ENCODE measurements at regions of chr22 and their contacts with region 1.

Region 1: GRCh38 chr22:39178206-39179111 is 26.0 kb upstream of the CBX7 start:
- DNase-seq: peak; percentile 94
- H3K4me3 ChIP-seq: no peak overlapping the region
- H3K27ac ChIP-seq: peak overlapping the region; percentile 99
- H3K4me1 ChIP-seq: peaks cover 58% of the 10 kb centered on the region
- H3K27me3 ChIP-seq: no peaks in the 10 kb centered on the region
- CTCF ChIP-seq: no peak
- POLR2A ChIP-seq: no peak

Region 2: DNA sequence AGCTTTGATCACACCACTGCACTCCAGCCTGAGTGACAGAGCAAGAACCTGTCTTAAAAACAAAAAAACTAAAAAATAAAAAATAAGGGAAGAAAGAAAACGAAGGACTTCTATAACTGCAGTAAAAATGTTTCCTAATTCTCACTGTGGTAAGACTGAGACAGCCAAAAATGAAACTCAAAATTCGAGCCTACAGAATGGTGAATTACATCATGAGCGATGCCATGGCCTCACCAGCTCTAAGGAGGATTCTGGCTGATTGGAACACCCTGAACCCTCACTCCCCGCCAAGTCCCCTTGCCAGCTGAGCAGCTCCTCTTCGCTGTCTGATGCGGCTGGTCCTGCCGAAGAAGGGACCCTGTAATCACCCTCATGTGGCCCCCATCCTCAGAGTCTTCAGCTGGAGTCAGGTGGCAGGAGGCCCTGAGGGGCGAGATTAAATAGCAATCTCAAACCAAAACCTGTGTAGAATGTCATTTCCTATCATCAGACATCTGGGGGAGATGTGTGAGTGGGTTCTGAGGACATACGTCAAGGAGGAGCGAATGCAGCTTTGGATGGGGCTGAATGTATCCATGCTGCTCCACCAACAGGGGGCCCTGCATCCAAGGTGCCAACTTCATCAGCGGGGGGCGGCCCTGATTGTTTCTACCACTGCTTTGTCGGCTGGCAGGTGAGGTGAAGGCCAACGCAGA is 37.1 kb after region 1 on chr22:
- CTCF ChIA-PET with region 1: interaction called, 3 read pairs
- POLR2A ChIA-PET with region 1: interaction called, 7 read pairs
- dilution Hi-C with region 1: no loop called
- intact Hi-C with region 1: loop called (anchors 1 kb)
- DNase-seq: no peak
- H3K4me3 ChIP-seq: no peak overlapping the region
- H3K27ac ChIP-seq: no peak overlapping the region
- H3K4me1 ChIP-seq: peaks cover 16% of the 10 kb centered on the region
- H3K27me3 ChIP-seq: no peaks in the 10 kb centered on the region
- CTCF ChIP-seq: peak; percentile 22 to 45
- POLR2A ChIP-seq: no peak

Region 3: GRCh38 chr22:39266398-39267030 is 88.1 kb after region 1 on chr22:
- CTCF ChIA-PET with region 1: no interaction called
- POLR2A ChIA-PET with region 1: no interaction called
- dilution Hi-C with region 1: no loop called
- intact Hi-C with region 1: no loop called
- DNase-seq: no peak
- H3K4me3 ChIP-seq: no peak overlapping the region
- H3K27ac ChIP-seq: no peak overlapping the region
- H3K4me1 ChIP-seq: peaks cover 18% of the 10 kb centered on the region
- H3K27me3 ChIP-seq: no peaks in the 10 kb centered on the region
- CTCF ChIP-seq: no peak
- POLR2A ChIP-seq: no peak

Measured in endothelial cell of umbilical vein (primary cell).